ENCODE measurements at regions of chr3 and their contacts with region 1.

Region 1: DNA sequence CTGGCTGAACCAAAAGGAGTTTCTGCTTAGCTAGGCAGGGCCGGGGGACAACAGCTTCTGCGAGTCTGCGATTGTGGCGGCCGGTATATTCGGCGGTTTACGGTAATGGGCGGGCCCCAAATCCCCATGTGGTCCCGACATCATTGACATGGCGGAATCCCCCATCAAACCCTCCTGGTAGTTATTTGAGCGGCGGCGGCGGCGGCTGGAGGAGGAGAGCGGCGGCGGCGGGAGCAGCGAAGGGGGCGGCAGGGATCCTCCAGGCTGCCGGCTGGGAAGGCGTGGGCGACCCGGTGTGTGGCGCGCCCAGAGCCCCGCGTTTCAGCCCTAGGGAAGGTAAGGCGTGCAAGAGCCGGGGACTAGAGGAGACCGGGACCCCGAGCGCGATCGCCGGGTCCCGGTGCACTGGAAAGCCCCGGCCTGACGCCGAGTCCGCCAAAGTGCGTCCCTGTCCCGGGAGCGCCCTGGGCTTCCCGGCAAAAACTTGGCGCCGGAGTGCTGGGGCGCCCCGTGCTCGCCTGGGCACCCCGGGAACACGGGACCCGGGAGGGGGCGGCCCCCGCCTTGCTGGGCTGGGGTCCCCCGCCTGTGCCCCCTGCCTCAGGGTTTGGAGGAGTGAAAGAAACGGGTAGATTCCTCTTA is at the start of gene FNDC3B:
- DNase-seq: peak; percentile 89
- H3K4me3 Mint-ChIP-seq: peak within 1 kb of the TSS; percentile 99
- H3K27ac Mint-ChIP-seq: peak within 1 kb of the TSS; percentile 99
- H3K4me1 Mint-ChIP-seq: peaks cover 31% of the 10 kb centered on the region
- H3K27me3 Mint-ChIP-seq: peaks cover 13% of the 10 kb centered on the region
- total RNA-seq, gene FNDC3B: 29.0 and 31.5 TPM in 2 replicates

Region 2: GRCh38 chr3:171846597-171846996 is 193.0 kb before region 1 on chr3:
- intact Hi-C with region 1: loop called (anchors 2 kb)
- DNase-seq: peak; percentile 7
- H3K4me3 Mint-ChIP-seq: no peak overlapping the region
- H3K27ac Mint-ChIP-seq: no peak overlapping the region
- H3K4me1 Mint-ChIP-seq: peaks cover 20% of the 10 kb centered on the region
- H3K27me3 Mint-ChIP-seq: peaks cover 11% of the 10 kb centered on the region

Region 3: GRCh38 chr3:172087602-172088580 is 48.3 kb after region 1 on chr3:
- intact Hi-C with region 1: loop called (anchors 1 kb)
- DNase-seq: no peak
- H3K4me3 Mint-ChIP-seq: peak overlapping the region; percentile 25
- H3K27ac Mint-ChIP-seq: peak overlapping the region; percentile 59
- H3K4me1 Mint-ChIP-seq: peaks cover 66% of the 10 kb centered on the region
- H3K27me3 Mint-ChIP-seq: no peaks in the 10 kb centered on the region

Region 4: DNA sequence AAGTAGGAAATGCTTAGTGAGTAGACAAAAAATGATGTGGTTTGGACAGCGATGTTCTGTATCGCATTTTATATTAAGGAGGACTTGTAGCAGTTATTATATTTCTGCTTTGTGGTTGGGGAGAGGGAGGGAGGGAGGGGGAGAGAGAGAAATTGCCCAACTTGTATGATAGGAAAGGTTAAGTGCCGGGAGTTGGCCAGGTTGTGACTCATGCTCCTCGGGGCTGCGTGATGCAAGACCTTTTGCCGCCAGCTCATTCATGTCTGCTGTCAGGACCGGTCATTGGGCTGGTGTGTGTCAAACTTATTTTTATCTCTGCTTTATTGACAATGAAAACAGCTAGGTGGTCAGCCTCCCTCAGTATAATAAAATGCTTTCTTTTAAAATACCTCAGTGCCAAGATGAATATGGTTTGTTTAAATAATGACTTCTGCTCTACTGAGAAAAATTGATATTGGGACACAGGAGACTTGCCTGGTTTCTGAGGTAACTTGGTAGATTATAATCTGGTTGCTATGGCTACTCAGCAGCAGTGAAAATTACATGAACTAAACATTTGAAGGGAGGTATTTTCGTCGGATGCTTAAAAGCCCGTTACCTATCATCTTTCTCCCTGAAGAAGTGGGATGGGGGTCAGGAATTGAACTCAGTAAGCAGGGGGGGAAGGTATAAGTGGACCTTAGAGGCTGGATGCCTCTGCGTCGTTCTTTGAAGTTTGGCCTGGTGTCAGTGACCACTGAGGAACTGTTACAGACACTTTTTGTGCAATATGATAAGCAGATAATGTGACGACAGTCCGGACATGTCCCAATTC is 90.5 kb after region 1 on chr3:
- intact Hi-C with region 1: loop called (anchors 10 kb)
- DNase-seq: no peak
- H3K4me3 Mint-ChIP-seq: peak overlapping the region; percentile 34
- H3K27ac Mint-ChIP-seq: peak overlapping the region; percentile 83
- H3K4me1 Mint-ChIP-seq: peaks cover 67% of the 10 kb centered on the region
- H3K27me3 Mint-ChIP-seq: no peaks in the 10 kb centered on the region

Region 5: GRCh38 chr3:172341482-172342059 is 302.0 kb after region 1 on chr3:
- intact Hi-C with region 1: loop called (anchors 1 kb)
- DNase-seq: peak; percentile 13
- H3K4me3 Mint-ChIP-seq: no peak overlapping the region
- H3K27ac Mint-ChIP-seq: no peak overlapping the region
- H3K4me1 Mint-ChIP-seq: no peaks in the 10 kb centered on the region
- H3K27me3 Mint-ChIP-seq: no peaks in the 10 kb centered on the region

Region 6: DNA sequence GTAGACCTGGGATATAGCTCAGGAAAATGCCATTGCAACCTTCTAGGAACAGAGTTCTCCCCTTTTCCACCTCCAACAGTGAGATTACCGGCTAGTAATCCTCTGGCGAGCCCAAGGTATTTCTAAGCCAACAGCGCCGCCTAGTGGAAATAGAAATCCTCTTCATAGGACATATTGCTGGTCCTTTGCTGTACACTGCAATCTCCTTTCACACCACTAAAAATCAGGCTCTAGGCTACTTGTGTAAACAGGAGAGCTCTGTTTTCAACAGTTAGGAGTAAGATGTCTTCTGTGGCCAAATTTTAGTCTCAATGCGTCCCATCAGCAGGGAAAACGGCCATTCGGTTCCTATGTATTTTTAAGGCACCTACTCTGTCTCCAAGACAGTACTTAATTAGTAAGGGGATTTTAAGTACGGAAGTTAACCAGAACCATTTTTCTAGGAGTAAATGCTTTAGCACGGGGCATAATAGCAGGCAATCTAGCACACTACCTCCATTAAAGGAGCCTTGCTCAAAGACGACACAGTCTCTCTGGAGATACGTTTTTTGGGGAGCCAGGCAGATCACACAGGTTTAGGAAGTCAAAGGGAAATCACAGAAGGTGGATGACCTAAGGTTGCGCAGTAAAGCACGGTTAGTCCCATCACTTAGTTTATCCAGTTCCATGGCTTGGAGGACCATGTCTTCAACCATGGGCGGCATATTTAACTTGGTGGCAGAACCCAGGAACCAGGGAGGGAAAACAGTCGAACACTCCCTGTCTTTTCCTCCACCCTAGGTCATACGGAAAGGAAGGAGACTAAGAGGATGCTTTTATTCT is 627.5 kb after region 1 on chr3:
- intact Hi-C with region 1: loop called (anchors 2 kb)
- DNase-seq: peak; percentile 70
- H3K4me3 Mint-ChIP-seq: peak overlapping the region; percentile 43
- H3K27ac Mint-ChIP-seq: no peak overlapping the region
- H3K4me1 Mint-ChIP-seq: peaks cover 20% of the 10 kb centered on the region
- H3K27me3 Mint-ChIP-seq: no peaks in the 10 kb centered on the region

Measured in activated T-helper 1 cell treated with anti-CD3 and anti-CD28 coated beads, Interleukin-12 subunit alpha, Interleukin-12 subunit beta, Interleukin-2, Interleukin-4 antibody, amounts not matched to agents 30 ng/mL and 10 ng/mL and 1 ng/mL, durations not matched to agents 14 hours and 24 hours and 36 hours (primary cell).